AG04449 (cell line): ENCODE measurements at regions of chr4 and their contacts with region 1.

Region 1: GRCh38 chr4:83034630-83035494 is at the start of gene COPS4:
- DNase-seq: peak; percentile 99
- H3K4me3 ChIP-seq: peak within 1 kb of the TSS; percentile 92
- CTCF ChIP-seq: peak; percentile 45

Region 2: GRCh38 chr4:82706349-82707000 is 328.4 kb before region 1 on chr4:
- CTCF ChIA-PET with region 1: no interaction called
- POLR2A ChIA-PET with region 1: no interaction called
- DNase-seq: no peak
- H3K4me3 ChIP-seq: no peak overlapping the region
- CTCF ChIP-seq: no peak

Region 3: GRCh38 chr4:82900331-82901128 is 134.3 kb before region 1 on chr4 and contains the start of gene THAP9:
- CTCF ChIA-PET with region 1: interaction called, 3 read pairs
- POLR2A ChIA-PET with region 1: interaction called, 11 read pairs
- DNase-seq: peak; percentile 97
- H3K4me3 ChIP-seq: peak within 1 kb of the TSS; percentile 82
- CTCF ChIP-seq: no peak

Region 4: DNA sequence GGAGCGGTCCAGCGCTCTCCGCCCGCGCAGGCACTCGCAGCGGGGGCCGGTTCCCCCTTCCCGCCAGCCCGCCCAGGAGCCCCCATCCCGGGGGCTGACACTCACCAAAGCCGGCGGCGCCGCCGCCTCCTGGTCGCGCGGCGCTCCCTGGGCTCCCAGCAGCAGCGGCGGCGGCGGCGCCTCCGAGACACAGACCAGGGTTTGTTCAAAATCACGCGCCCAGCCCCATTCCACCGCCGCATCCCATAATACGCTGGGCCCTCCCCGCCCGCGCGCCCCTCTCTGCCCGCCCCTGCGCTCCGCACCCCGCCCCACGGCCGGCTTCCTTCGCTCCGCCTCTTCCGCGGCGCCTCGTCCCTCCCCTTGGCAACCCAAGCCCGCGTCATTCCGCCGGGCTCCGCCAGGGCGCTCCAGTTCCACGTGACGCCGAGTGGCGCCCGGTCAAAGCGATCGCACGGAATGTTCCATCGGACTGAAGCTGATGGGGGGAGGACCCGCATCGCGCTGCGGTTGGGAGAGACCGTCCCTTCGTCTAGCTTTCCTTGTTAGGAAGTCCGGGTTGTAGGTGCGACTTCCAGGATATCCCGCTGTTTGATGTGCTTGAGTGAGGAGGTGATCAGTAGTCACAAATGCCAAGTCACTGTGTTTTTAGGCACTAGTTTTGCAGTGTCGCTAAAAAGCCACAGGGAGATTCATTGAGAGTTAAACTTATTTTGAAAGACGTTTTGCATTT is 22.0 kb before region 1 on chr4:
- CTCF ChIA-PET with region 1: interaction called, 8 read pairs
- POLR2A ChIA-PET with region 1: interaction called, 11 read pairs
- DNase-seq: peak; percentile 79
- H3K4me3 ChIP-seq: peak overlapping the region; percentile 76
- CTCF ChIP-seq: peak; percentile 67

Region 5: GRCh38 chr4:83259586-83259985 is 224.7 kb after region 1 on chr4:
- CTCF ChIA-PET with region 1: interaction called, 32 read pairs
- POLR2A ChIA-PET with region 1: interaction called, 5 read pairs
- DNase-seq: no peak
- H3K4me3 ChIP-seq: no peak overlapping the region
- CTCF ChIP-seq: no peak